Panc1 (cell line): ENCODE measurements at regions of chr22 and their contacts with region 1.

Region 1: DNA sequence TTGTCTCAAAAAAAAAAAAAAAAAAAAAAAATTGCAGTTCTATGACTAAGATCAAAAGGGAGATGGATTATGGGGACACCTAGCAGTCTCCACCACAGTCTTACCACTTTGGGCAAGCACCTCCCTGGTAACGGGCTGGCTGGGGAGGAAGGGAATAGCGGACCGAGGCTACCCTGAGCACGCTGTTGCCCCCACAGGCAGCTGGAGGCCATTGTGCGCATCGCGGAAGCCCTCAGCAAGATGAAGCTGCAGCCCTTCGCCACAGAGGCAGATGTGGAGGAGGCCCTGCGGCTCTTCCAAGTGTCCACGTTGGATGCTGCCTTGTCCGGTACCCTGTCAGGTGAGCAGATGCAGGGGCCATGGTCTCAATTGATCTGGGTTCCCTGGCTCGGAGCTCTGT is 21.2 kb downstream of the MCM5 start:
- DNase-seq: no peak
- ATAC-seq: no peak
- H3K4me3 ChIP-seq: no peak overlapping the region
- H3K27ac ChIP-seq: no peak overlapping the region
- H3K4me1 ChIP-seq: 0 out of 2 replicates have a peak, but pooled peaks cover 3% of the 10 kb centered on the region
- H3K27me3 ChIP-seq: no peaks in the 10 kb centered on the region
- CTCF ChIP-seq: no peak

Region 2: GRCh38 chr22:35596821-35597220 is 175.7 kb after region 1 on chr22:
- CTCF ChIA-PET with region 1: no interaction called
- POLR2A ChIA-PET with region 1: interaction called, 16 read pairs
- in situ Hi-C with region 1: no loop called
- intact Hi-C with region 1: no loop called
- DNase-seq: no peak
- ATAC-seq: no peak
- H3K4me3 ChIP-seq: no peak overlapping the region
- H3K27ac ChIP-seq: peak overlapping the region; percentile 99; the same call in 1 of the 2 replicates
- H3K4me1 ChIP-seq: peaks cover 35% of the 10 kb centered on the region
- H3K27me3 ChIP-seq: no peaks in the 10 kb centered on the region
- CTCF ChIP-seq: no peak

Region 3: DNA sequence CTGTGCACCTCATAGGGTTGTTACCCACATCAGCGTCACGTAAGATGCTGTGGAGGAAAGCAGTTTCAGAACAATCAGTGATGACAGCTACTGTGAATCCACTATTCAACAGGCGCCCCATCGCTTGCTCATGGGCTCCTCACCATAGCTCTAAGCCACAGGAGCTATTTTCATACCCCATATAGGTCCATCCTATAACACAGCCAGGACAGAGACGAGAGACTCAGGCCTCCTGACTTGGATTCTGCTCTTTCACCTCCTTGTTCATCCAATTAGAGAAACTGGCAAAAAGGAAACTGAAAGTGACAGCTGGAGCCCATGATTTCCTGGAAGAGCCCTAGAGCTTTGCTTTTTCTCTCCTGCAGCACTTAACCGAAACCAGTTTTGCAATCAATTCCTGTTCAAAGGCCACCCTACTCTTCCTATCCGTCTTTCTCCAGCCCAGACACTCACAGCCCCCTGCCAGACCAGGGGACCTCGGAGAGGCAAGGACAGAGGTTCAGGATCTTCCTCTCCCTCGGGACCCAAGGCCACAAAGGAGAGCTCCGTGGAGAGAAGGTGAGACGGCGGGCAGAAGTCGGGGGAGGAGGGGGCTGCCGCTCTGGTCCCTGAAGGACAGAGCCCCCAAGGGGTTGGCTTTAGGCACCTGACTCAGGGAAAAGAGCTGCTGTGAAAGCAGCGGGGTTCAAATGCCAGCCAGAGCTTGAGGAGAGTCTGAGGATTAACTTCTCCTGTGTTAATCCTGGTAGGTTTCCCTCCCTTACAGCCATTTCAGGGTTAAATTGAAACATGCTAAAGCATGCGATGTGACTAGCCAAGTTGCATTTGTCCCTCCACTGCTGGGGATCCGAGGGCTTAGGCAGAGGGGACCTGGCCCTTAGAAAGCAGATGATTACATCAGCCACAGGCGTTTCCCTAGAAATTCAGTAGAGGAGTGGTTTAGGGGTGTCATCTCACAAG is 227.2 kb after region 1 on chr22 and contains the start of gene APOL6:
- CTCF ChIA-PET with region 1: no interaction called
- POLR2A ChIA-PET with region 1: interaction called, 11 read pairs
- in situ Hi-C with region 1: no loop called
- intact Hi-C with region 1: no loop called
- DNase-seq: no peak
- ATAC-seq: peak; percentile 66
- H3K4me3 ChIP-seq: peak within 1 kb of the TSS; percentile 57 to 64
- H3K27ac ChIP-seq: peak within 1 kb of the TSS; percentile 99
- H3K4me1 ChIP-seq: peaks cover 22% of the 10 kb centered on the region
- H3K27me3 ChIP-seq: no peaks in the 10 kb centered on the region
- CTCF ChIP-seq: no peak
- total RNA-seq, gene APOL6: 16.4 TPM